ENCODE measurements at regions of chr18 and their contacts with region 1.

Region 1: DNA sequence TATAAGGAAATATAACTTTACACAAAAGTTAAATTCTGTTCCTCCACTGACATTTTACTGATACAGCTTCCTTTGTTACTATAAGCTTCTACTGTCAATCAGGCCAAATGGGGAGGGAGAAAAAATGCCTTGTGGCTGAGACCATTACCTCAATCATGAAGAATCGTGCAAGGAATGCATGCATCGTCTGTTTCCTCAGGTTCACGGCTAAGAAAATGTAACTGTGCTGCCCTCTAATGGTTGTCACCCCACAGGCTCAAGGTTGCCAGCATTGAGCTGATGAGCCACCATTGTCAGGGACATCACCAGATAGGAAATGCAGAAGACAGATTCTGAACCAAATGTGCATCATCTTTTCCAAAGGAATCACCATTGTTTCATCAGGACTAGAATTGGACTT is 426.9 kb downstream of the CDH2 start:
- DNase-seq: no peak
- ATAC-seq: peak; percentile 88

Region 2: GRCh38 chr18:27363872-27364271 is 386.1 kb before region 1 on chr18:
- intact Hi-C with region 1: loop called (anchors 10 kb)
- DNase-seq: no peak
- ATAC-seq: no peak

Region 3: GRCh38 chr18:27605107-27605834 is 144.7 kb before region 1 on chr18:
- intact Hi-C with region 1: loop called (anchors 2 kb)
- DNase-seq: peak; percentile 28
- ATAC-seq: peak; percentile 96

Region 4: GRCh38 chr18:27685807-27686412 is 64.1 kb before region 1 on chr18:
- intact Hi-C with region 1: loop called (anchors 5 kb)
- DNase-seq: no peak
- ATAC-seq: peak; percentile 45

Region 5: DNA sequence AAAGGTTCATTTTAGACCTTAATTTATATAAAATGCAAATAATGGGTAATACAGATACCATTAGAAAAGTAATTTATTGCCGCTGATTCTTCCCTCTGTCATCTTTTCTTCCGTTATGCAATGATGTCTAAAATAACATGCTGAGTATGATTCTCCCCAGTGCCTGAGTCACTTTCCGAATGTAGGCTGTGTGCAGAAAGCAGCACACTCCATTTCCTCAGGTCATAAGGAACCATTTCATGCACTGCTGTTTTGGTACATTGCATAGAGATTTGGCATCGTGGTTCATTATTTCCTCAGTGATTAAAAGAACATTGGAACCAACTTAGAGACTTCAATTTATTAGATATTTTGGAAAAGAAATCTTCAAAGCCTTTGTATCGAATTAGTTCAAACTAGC is 253.4 kb after region 1 on chr18:
- intact Hi-C with region 1: no loop called
- DNase-seq: no peak
- ATAC-seq: peak; percentile 65